HEK293 (cell line): ENCODE measurements at regions of chr17 and their contacts with region 1.

Region 1: GRCh38 chr17:7021993-7022778 is 664 bp upstream of the BCL6B start:
- H3K4me3 ChIP-seq: no peak overlapping the region
- H3K27ac ChIP-seq: no peak overlapping the region
- H3K4me1 ChIP-seq: peaks cover 3% of the 10 kb centered on the region; the same call in 1 of the 2 replicates
- CTCF ChIP-seq: peak; percentile 90

Region 2: DNA sequence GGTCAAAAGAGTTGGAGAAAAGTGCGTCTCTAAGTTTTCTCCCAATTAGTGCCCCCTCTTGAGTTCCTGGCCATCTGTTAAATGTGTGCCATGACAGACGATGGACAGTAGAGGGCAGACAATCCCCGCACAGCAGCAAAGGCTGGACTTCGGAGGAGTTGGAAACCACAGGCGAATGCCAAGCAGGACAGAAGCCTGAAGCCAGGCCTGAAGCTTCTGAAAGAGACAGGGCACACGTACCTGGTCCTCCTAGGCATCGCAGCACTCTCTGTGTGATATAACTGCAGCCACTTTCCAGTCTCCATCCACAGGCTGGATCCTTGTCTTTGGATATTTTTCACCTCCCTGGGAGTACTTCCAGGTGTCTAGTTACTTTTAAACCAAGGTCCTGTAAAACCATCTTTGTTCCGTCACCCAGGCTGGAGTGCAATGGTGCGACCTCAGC is 356.1 kb before region 1 on chr17:
- CTCF ChIA-PET with region 1: interaction called, 21 read pairs
- POLR2A ChIA-PET with region 1: no interaction called
- H3K4me3 ChIP-seq: no peak overlapping the region
- H3K27ac ChIP-seq: no peak overlapping the region
- H3K4me1 ChIP-seq: no peaks in the 10 kb centered on the region
- CTCF ChIP-seq: peak; percentile 86

Region 3: DNA sequence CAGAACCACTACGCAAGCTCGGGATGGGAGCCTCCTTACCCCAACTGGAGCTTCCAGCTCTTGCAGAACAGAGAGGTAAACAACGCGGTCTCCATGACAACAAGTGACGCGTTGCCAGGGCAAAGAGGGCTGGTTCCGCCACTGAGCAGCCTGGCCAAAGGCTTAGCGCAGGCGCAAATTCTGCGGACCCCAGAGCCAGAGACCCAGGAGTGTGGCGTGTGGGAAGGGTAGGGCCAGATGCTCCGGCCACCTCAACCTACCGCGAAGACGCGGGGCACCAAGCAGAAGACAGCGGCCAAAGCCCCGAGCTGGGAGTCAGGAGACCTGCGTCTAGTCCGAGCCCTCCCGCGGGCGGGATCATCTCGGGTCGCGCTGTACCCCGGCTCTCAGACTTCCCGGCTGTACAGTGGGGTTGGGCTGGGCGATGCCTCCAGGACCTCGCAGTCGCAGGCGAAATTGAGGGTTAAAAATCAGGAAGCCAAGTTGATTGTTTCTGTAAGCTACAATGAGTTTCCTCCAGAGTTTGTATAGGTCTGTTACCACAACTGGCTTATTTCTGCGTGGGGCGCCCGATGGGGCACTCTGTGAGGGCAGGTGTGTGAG is 190.4 kb before region 1 on chr17 and contains the start of gene TEKT1:
- CTCF ChIA-PET with region 1: interaction called, 10 read pairs
- POLR2A ChIA-PET with region 1: no interaction called
- H3K4me3 ChIP-seq: peak within 1 kb of the TSS; percentile 65
- H3K27ac ChIP-seq: no peak within 1 kb of the TSS
- H3K4me1 ChIP-seq: no peaks in the 10 kb centered on the region
- CTCF ChIP-seq: no peak

Region 4: DNA sequence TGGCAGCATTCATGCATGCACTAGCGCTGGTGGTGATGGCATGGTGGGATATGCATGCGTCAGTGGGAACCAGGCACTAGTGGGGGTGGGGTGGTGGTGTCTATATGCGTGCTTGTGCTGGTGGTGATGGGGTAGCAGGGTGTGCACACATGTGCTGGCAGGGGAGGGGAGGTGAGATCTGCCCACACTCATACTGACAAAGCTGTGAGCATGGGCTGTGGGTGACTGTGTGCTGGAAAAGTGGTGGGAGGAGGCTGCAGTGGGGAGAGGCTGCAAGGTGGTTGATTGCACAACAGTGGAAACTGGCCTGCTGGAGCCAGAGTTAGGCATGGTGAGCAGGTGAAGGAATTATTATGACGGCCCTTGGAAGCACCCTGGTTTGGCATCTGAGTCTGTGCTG is 159.4 kb before region 1 on chr17:
- CTCF ChIA-PET with region 1: interaction called, 10 read pairs
- POLR2A ChIA-PET with region 1: no interaction called
- H3K4me3 ChIP-seq: no peak overlapping the region
- H3K27ac ChIP-seq: no peak overlapping the region
- H3K4me1 ChIP-seq: no peaks in the 10 kb centered on the region
- CTCF ChIP-seq: no peak

Region 5: GRCh38 chr17:6936370-6937028 is 85.7 kb before region 1 on chr17:
- CTCF ChIA-PET with region 1: no interaction called
- POLR2A ChIA-PET with region 1: no interaction called
- H3K4me3 ChIP-seq: no peak overlapping the region
- H3K27ac ChIP-seq: no peak overlapping the region
- H3K4me1 ChIP-seq: no peaks in the 10 kb centered on the region
- CTCF ChIP-seq: no peak

Region 6: GRCh38 chr17:7035591-7036368 is 13.6 kb after region 1 on chr17 and contains the start of gene SLC16A13:
- CTCF ChIA-PET with region 1: interaction called, 29 read pairs
- POLR2A ChIA-PET with region 1: interaction called, 7 read pairs
- H3K4me3 ChIP-seq: peak within 1 kb of the TSS; percentile 79
- H3K27ac ChIP-seq: peak within 1 kb of the TSS; percentile 62
- H3K4me1 ChIP-seq: 0 out of 2 replicates have a peak, but pooled peaks cover 2% of the 10 kb centered on the region
- CTCF ChIP-seq: 0 out of 2 replicates have a peak, but pooled peaks have one; percentile 24

Region 7: GRCh38 chr17:7064261-7064660 is 42.1 kb after region 1 on chr17:
- CTCF ChIA-PET with region 1: no interaction called
- POLR2A ChIA-PET with region 1: no interaction called
- H3K4me3 ChIP-seq: no peak overlapping the region
- H3K27ac ChIP-seq: no peak overlapping the region
- H3K4me1 ChIP-seq: 0 out of 2 replicates have a peak, but pooled peaks cover 5% of the 10 kb centered on the region
- CTCF ChIP-seq: no peak